BJ (cell line): ENCODE measurements at regions of chr22 and their contacts with region 1.

Region 1: DNA sequence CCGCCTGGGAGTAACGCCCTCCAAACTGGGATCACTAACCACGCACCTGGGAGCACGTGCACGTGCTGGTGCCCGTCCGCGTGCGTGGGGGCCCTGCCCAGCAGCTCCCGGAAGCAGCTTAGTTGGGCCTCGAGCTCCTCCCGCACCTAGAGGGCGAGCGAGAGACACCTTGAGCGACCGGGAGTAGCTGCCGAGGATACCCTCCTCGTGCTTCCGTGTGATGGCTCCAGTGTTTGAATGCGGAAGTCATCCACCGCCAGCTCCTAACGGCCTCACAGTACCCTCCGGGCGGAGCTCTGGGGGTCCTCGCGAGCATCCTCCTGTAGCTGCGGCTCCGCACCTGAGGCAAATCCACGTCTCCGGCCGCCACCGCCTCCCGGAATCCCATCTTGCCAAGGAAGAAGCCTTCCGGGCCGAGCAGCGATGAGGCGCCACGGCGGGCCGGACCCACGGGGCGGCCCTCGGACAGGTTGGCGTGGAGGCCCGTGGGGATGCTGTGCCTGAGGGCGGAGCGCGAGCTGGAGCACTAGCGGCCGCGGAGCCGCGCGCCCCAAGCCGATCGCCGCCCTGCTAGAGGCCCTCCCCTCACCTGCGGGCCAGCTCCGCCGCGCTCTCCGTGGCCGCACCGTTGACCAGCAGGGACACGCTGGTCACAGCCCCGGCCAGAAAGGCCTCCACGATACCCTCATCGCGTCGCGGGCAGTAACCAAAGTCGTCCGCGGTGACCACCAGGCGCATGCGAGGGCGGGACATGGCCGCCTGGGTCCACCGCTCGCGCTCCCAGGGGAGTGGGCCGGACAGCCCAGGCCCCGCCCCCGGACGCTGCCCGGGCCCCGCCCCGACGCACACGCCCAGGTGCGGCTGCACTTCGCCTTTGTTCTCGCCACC is at the start of gene YDJC:
- DNase-seq: peak; percentile 24
- H3K4me3 ChIP-seq: peak within 1 kb of the TSS; percentile 99
- H3K27me3 ChIP-seq: no peaks in the 10 kb centered on the region
- CTCF ChIP-seq: peak; percentile 68
- polyA plus RNA-seq, gene YDJC: 14.6 and 20.0 TPM in 2 replicates

Region 2: DNA sequence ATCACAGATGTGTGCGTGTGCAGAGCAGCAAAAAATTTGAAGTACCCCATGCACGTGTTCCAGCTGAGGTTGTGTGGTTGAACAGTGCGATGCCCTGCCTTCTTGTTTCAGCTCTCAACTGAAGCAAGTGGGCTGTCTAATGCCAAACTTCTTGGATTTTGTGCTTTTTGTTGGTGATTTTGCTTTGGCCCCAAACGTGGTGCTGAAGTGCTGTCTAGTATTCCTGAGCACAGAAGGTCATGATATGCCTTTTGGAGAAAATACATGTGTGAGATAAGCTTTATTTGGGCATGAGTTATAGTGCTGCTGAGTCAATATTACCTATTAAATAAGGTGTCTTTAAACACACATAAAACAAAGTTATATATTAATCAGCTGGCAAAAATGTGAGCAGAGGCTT is 13.8 kb before region 1 on chr22:
- CTCF ChIA-PET with region 1: interaction called, 35 read pairs
- POLR2A ChIA-PET with region 1: no interaction called
- DNase-seq: no peak
- H3K4me3 ChIP-seq: no peak overlapping the region
- H3K27me3 ChIP-seq: no peaks in the 10 kb centered on the region
- CTCF ChIP-seq: no peak

Region 3: DNA sequence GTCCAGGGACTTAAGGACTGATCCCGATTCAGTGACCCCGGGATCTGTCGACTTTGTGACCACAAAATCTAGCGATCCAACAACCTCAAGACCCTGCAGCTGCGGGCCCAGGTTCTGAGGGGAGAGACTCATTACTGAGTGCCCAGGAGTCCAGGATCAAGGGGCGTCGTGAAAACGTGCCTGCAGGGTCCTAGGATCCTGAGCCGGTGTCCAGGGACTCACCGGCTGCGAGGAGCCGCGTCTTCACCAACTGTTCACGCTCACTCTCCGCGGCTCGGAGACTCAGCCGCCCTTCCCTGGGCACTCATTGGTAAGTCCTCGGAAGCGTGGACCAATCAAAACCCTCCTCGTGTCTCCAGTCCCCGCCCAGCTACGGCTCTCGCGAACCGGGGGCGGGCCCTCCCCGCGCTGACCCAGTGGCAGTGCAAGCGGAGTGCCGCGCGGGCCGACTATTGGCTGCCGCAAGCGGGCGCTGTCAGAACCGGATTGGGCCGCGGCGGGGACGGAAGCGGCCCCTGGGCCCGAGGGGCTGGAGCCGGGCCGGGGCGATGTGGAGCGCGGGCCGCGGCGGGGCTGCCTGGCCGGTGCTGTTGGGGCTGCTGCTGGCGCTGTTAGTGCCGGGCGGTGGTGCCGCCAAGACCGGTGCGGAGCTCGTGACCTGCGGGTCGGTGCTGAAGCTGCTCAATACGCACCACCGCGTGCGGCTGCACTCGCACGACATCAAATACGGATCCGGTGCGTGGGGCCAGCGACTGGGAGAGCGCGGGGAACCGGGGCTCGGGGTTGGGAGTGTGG is 12.5 kb after region 1 on chr22 and contains the start of gene SDF2L1:
- CTCF ChIA-PET with region 1: interaction called, 71 read pairs
- POLR2A ChIA-PET with region 1: no interaction called
- DNase-seq: peak; percentile 91
- H3K4me3 ChIP-seq: peak within 1 kb of the TSS; percentile 92
- H3K27me3 ChIP-seq: no peaks in the 10 kb centered on the region
- CTCF ChIP-seq: no peak
- polyA plus RNA-seq, gene SDF2L1: 10.9 and 22.8 TPM in 2 replicates

Region 4: DNA sequence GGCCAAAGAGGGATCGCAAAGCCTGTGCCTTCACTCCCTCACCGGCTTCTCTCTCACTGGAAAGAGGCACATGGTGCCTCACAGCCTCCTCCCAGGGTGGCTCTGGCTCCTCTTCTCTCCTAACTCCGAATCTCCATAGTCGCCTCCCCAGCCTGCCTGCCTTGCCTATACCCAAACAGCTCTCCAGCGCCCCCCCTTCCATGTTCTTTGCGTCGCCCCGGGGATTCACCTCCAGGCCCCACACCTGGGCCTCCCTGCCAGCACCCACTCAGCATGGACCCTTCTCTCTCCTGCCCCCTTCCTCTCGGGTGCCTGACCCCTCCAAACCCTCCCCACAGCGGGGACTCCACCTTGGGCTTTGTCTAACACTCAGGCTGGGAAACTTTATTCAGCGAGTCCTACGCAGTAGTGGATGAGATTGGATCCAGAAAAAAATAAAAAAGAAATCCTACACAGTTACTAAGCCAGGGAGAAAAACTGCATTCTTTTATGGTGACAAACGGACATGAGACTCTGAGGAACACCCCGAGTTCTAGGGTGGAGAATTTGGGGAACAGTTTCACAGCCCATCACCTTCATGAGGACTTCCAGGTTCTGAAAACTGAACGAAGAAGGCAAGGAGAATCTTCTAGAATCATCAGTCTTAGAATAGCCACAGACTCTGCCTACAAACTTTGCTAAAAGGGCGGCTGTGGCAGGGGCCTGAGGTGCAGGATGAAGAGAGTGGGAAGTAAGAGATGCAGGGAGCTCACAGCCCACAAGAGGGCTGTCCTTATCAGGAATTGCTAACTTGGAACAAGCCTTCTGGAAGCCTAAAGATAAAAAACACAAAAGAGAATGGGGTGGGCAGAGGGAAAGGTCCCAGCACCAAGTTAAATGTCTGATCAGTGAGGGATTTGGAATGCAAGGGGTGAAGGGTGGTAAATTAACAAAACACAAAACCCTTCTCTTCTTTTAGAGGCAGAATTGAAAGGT is 317.8 kb after region 1 on chr22:
- CTCF ChIA-PET with region 1: no interaction called
- POLR2A ChIA-PET with region 1: no interaction called
- DNase-seq: no peak
- H3K4me3 ChIP-seq: no peak overlapping the region
- H3K27me3 ChIP-seq: no peaks in the 10 kb centered on the region
- CTCF ChIP-seq: peak; percentile 75

Region 5: DNA sequence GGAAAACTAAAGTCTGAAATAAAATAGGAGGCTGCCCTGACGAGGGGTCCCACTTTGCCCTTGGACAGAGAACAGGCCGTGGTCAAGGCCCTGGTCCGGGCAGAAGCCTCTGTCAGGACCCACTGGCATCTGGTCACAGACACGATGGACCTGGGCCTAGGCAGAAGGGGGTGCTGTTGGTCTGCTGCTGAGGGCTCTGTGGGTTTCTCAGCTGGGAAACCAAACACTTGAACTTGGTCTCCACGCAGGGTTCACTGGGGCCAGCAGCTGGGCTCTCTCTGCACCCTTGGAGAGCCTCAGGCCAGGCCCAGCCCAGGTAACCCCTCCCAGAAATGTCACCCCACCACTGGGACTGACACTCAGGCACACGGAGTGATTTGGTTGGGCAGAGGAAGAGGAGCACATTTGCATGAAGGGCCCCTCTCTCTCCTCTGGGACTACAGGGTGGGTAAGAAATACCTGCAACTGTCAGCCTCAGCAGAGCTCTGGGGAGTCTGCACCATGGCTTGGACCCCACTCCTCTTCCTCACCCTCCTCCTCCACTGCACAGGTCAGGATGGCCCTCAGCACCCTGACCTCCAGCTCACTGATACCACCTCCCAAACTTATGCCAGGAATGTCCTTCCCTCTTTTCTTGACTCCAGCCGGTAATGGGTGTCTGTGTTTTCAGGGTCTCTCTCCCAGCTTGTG is 401.1 kb after region 1 on chr22:
- CTCF ChIA-PET with region 1: no interaction called
- POLR2A ChIA-PET with region 1: no interaction called
- DNase-seq: no peak
- H3K4me3 ChIP-seq: no peak overlapping the region
- H3K27me3 ChIP-seq: no peaks in the 10 kb centered on the region; the same call in 1 of the 2 replicates
- CTCF ChIP-seq: no peak